Esophagus muscularis mucosa (tissue), 4 donors: ENCODE measurements at regions of chr9 and their contacts with region 1.

Region 1: GRCh38 chr9:7841831-7842230 is 42.3 kb upstream of the DMAC1 start:
- DNase-seq: no peak
- H3K4me3 ChIP-seq: no peak overlapping the region
- H3K27ac ChIP-seq: no peak overlapping the region
- H3K4me1 ChIP-seq: no peaks in the 10 kb centered on the region
- H3K27me3 ChIP-seq: no peaks in the 10 kb centered on the region
- CTCF ChIP-seq: no peak
- EP300 ChIP-seq: no peak
- POLR2A ChIP-seq: no peak

Region 2: DNA sequence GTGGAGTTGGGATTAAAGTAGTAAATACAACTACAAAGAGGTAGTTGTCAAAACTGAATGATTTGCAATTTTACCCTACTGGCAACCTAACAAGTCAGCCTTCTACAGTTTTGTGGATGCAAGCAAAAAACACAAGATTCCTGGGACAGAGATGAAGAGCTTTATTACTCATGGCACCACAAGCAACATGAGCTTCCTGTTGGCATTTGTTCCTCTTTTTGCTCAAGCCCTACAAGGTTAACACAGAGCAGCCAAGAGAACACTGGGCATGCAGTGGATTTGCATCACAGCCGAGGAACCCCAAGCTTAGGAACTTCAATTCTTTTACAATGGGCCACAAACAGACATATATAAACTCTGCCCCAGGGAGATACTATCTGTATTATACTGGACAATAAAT is 13.5 kb before region 1 on chr9:
- intact Hi-C with region 1: loop called (anchors 1 kb)
- DNase-seq: no peak
- H3K4me3 ChIP-seq: no peak overlapping the region
- H3K27ac ChIP-seq: no peak overlapping the region
- H3K4me1 ChIP-seq: no peaks in the 10 kb centered on the region
- H3K27me3 ChIP-seq: no peaks in the 10 kb centered on the region
- CTCF ChIP-seq: no peak
- EP300 ChIP-seq: no peak
- POLR2A ChIP-seq: no peak